CD8-positive, alpha-beta T cell (primary cell): ENCODE measurements at regions of chr14 and their contacts with region 1.

Region 1: GRCh38 chr14:44961604-44962333 is at the starts of genes KLHL28 and TOGARAM1:
- DNase-seq: peak; percentile 91 to 100 (median 95)
- ATAC-seq: peak; percentile 87
- H3K4me3 ChIP-seq: peak within 1 kb of the TSS; percentile 75 to 91
- H3K4me3 Mint-ChIP-seq: no peak within 1 kb of the TSS
- H3K27ac ChIP-seq: peak within 1 kb of the TSS; percentile 94 to 95
- H3K27ac Mint-ChIP-seq: no peak within 1 kb of the TSS
- H3K4me1 ChIP-seq: peaks cover 42% of the 10 kb centered on the region
- H3K4me1 Mint-ChIP-seq: peaks cover 66% of the 10 kb centered on the region
- H3K27me3 ChIP-seq: no peaks in the 10 kb centered on the region
- H3K27me3 Mint-ChIP-seq: no peaks in the 10 kb centered on the region
- CTCF ChIP-seq: no peak
- total RNA-seq, gene KLHL28: 49.0 to 49.1 TPM
- total RNA-seq, gene TOGARAM1: 15.5 to 17.9 TPM

Region 2: GRCh38 chr14:44897045-44897844 is 64.5 kb before region 1 on chr14:
- CTCF ChIA-PET with region 1: interaction called, 6 read pairs
- POLR2A ChIA-PET with region 1: interaction called, 45 read pairs
- intact Hi-C with region 1: loop called (anchors 1 kb)
- DNase-seq: peak; percentile 98 to 99 (median 98)
- ATAC-seq: peak; percentile 97
- H3K4me3 ChIP-seq: peak overlapping the region; percentile 73 to 75
- H3K4me3 Mint-ChIP-seq: peak overlapping the region; percentile 93
- H3K27ac ChIP-seq: peak overlapping the region; percentile 86 to 92
- H3K27ac Mint-ChIP-seq: peak overlapping the region; percentile 98
- H3K4me1 ChIP-seq: peaks cover 17% of the 10 kb centered on the region
- H3K4me1 Mint-ChIP-seq: peaks cover 25% of the 10 kb centered on the region
- H3K27me3 ChIP-seq: no peaks in the 10 kb centered on the region
- H3K27me3 Mint-ChIP-seq: no peaks in the 10 kb centered on the region
- CTCF ChIP-seq: no peak

Region 3: DNA sequence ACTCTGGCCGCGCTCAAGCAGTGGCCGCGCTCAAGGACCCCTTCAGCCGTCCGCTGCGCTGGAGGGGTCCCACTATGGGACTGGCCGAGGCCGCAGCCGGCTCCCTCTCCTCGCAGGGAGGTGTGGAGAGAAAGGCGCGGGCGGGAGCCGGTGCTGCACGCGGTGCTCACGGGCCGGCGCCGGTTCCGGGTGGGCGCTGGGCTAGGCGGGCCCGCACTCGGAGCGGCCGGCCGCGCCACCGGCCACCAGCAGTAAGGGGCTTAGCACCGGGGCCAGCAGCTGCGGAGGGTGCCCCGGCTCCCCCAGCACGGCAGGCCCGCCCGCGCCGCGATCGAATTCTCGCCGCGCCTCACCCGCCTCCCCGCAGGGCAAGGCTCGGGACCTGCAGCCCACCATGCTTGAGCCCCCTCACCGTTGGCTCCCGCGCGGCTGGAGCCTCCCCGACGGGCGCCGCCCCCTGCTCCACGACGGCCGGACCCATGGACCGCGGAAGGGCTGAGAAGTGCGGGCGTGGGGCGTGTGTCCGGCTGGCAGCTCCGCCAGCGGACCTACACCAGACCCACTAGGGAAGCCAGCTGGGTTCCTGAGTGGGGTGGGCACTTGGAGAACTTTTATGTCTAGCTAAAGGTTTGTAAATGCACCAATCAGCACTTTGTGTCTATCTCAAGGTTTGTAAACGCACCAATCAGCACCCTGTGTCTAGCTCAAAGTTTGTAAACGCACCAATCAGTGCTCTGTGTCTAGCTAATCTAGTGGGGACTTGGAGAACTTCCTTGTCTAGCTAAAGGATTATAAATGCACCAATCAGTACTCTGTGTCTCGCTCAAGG is 49.5 kb before region 1 on chr14:
- CTCF ChIA-PET with region 1: no interaction called
- POLR2A ChIA-PET with region 1: interaction called, 11 read pairs
- intact Hi-C with region 1: no loop called
- DNase-seq: peak in 1 of 9 experiments; percentile 8
- ATAC-seq: no peak
- H3K4me3 ChIP-seq: peak overlapping the region in 1 of 2 experiments; percentile 27
- H3K4me3 Mint-ChIP-seq: peak overlapping the region; percentile 58
- H3K27ac ChIP-seq: no peak overlapping the region
- H3K27ac Mint-ChIP-seq: no peak overlapping the region
- H3K4me1 ChIP-seq: no peaks in the 10 kb centered on the region
- H3K4me1 Mint-ChIP-seq: peaks cover 10% of the 10 kb centered on the region
- H3K27me3 ChIP-seq: peaks cover 11 to 23% of the 10 kb centered on the region in 2 experiments
- H3K27me3 Mint-ChIP-seq: peaks cover 34% of the 10 kb centered on the region
- CTCF ChIP-seq: no peak

Region 4: GRCh38 chr14:44945264-44945663 is 16.5 kb before region 1 on chr14:
- CTCF ChIA-PET with region 1: interaction called, 3 read pairs
- POLR2A ChIA-PET with region 1: interaction called, 8 read pairs
- intact Hi-C with region 1: loop called in 1 of 2 experiments (anchors 2 kb)
- DNase-seq: no peak
- ATAC-seq: no peak
- H3K4me3 ChIP-seq: no peak overlapping the region
- H3K4me3 Mint-ChIP-seq: no peak overlapping the region
- H3K27ac ChIP-seq: no peak overlapping the region
- H3K27ac Mint-ChIP-seq: peak overlapping the region; percentile 10
- H3K4me1 ChIP-seq: peaks cover 6% of the 10 kb centered on the region
- H3K4me1 Mint-ChIP-seq: peaks cover 50% of the 10 kb centered on the region
- H3K27me3 ChIP-seq: no peaks in the 10 kb centered on the region
- H3K27me3 Mint-ChIP-seq: no peaks in the 10 kb centered on the region
- CTCF ChIP-seq: no peak

Region 5: GRCh38 chr14:45083971-45084722 is 122.4 kb after region 1 on chr14 and contains the start of gene PRPF39:
- CTCF ChIA-PET with region 1: no interaction called
- POLR2A ChIA-PET with region 1: interaction called, 16 read pairs
- intact Hi-C with region 1: loop called (anchors 1 kb)
- DNase-seq: peak; percentile 89 to 98 (median 94)
- ATAC-seq: peak; percentile 91
- H3K4me3 ChIP-seq: peak within 1 kb of the TSS; percentile 78 to 93
- H3K4me3 Mint-ChIP-seq: peak within 1 kb of the TSS; percentile 94
- H3K27ac ChIP-seq: peak within 1 kb of the TSS; percentile 82 to 84
- H3K27ac Mint-ChIP-seq: peak within 1 kb of the TSS; percentile 95
- H3K4me1 ChIP-seq: peaks cover 47% of the 10 kb centered on the region
- H3K4me1 Mint-ChIP-seq: peaks cover 55% of the 10 kb centered on the region
- H3K27me3 ChIP-seq: no peaks in the 10 kb centered on the region
- H3K27me3 Mint-ChIP-seq: no peaks in the 10 kb centered on the region
- CTCF ChIP-seq: no peak
- total RNA-seq, gene PRPF39: 64.5 to 64.7 TPM

Region 6: DNA sequence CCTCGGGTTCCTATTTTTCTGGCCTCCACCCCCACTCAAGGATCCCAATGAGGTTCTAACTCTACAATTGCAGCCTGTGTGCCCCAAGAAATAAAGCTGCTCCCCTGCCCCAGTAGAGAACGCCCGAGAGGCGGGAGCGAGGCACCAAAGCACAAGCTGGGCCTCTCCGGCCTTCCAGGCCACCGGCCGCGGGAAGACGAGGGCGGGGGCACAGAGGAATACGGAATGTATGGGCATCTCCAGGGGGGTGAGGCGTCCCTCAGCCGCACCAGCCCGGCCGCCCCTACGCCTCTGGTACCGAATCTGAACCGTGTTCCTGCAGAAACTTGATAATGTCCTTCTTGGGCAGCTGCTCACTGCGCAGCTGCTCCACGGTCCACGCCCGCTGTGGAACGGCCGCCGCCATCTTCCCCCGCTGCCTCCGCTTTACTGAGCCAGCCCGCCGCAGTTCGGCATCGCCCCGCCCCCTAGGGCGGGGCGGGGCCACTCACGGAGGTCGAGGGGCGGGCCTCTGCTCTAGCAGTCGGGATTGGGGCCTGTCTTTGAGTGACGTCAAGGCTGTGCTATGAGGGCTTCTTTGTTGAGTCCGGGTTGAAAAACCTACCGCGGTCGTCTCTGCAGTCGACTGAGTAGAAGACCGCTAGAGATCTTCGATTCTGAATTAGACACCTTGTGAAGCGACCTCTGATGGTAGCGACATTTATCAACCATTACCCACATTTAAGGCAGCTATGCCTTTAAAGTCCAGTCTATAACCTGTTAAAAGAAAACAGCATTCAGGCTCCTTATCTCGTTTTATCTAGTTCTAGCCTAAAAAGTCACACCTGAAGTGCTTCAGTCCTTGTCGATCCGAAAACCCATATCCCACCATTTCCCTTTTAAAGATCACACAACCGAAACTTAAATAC is 172.5 kb after region 1 on chr14 and contains the start of gene FKBP3:
- CTCF ChIA-PET with region 1: interaction called, 8 read pairs
- POLR2A ChIA-PET with region 1: interaction called, 45 read pairs
- intact Hi-C with region 1: loop called (anchors 1 kb)
- DNase-seq: peak; percentile 90 to 99 (median 95)
- ATAC-seq: peak; percentile 91
- H3K4me3 ChIP-seq: peak within 1 kb of the TSS; percentile 84 to 98
- H3K4me3 Mint-ChIP-seq: peak within 1 kb of the TSS; percentile 97
- H3K27ac ChIP-seq: peak within 1 kb of the TSS; percentile 84 to 92
- H3K27ac Mint-ChIP-seq: peak within 1 kb of the TSS; percentile 98
- H3K4me1 ChIP-seq: peaks cover 31% of the 10 kb centered on the region
- H3K4me1 Mint-ChIP-seq: peaks cover 48% of the 10 kb centered on the region
- H3K27me3 ChIP-seq: no peaks in the 10 kb centered on the region
- H3K27me3 Mint-ChIP-seq: no peaks in the 10 kb centered on the region
- CTCF ChIP-seq: no peak
- total RNA-seq, gene FKBP3: 32.1 to 32.3 TPM